Spleen (tissue), 13 donors: ENCODE measurements at regions of chr20 and their contacts with region 1.

Region 1: DNA sequence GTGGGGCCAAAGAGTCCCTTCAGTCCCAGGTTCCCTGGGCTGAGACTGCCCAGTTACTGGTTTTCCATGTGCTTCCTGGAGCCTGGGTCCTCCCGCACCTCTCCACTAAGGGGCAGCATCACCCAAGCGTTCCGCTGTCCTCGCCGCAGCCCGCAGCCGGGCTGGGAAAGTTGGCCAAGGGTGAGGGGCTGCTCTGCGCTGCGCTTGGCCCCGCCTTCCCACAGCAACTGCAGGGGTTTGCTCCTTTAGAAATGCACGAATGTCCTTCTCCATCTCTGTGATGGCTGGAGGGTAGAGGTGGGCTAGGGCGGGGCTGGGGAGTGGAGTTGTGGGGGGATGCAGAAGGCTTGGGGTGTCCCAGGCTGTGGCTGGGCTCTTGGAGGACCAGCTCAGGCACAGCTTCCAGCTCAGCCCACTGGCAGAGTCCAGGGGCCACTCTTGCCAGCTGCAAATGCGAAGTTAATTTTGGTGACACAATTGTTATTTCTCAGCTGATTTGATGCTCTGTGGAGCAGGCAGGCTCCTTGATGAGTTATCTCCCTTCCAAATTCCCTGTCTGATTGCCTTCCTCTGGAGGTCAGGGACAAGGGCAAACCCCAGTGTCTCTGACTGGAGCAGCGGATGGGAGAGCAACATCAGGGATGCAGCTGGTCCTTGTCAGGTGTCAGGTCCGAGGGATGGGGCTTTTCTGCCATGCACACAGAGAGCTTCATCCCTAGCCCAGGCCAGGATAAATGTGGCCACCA is 63.2 kb downstream of the NOL4L start:
- DNase-seq: peak; percentile 89
- H3K4me3 ChIP-seq: no peak overlapping the region
- H3K27ac ChIP-seq: peak overlapping the region in 7 of 8 donors; percentile 19 to 76 (median 64)
- H3K4me1 ChIP-seq: peaks cover 50 to 86% (median 78%) of the 10 kb centered on the region in 6 donors
- H3K27me3 ChIP-seq: no peaks in the 10 kb centered on the region
- CTCF ChIP-seq: peak; percentile 81 to 93 (median 88)
- POLR2A ChIP-seq: no peak

Region 2: GRCh38 chr20:32183947-32184635 is 337.9 kb before region 1 on chr20:
- intact Hi-C with region 1: no loop called
- DNase-seq: no peak
- H3K4me3 ChIP-seq: no peak overlapping the region
- H3K27ac ChIP-seq: no peak overlapping the region
- H3K4me1 ChIP-seq: peaks cover under 1 to 12% (median 6%) of the 10 kb centered on the region in 6 donors
- H3K27me3 ChIP-seq: no peaks in the 10 kb centered on the region
- CTCF ChIP-seq: no peak
- POLR2A ChIP-seq: no peak

Region 3: DNA sequence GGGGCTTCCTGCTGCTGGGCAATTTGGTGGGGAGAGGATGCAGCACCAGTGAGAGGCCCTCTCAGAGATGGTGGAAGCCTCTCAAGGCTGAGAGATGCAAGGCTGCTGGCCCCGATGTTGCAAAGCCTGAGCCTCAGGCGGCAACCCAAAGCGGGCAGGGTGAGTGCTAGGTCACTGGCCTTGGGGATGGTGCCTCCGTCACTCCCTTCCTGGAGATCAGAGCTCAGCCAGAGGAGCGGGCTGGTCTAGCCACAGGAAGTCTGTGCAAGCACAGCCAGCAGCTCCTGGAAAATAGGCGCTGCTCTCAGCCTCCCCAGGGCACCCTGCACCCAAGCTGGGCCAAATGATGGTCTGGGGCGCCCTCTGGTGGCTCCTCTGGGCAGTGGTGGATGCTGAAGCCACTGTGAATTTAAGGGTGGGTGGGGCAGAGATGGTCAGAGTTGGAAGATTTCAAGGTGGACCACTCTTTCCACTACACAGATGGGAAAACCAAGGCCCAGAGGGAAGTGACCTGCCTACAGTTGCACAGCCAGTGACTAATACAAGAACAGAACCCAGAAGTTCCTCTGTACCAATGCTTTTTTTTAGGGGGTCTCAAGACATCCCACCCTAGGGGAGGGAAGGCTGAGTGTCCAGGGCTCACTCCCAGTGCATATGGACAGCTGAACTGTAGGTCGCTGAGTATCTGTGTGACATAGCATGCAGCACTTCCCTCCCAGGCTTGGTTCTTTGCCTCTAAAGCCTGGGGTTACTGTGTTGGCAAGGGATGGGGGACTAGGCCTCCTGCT is 131.0 kb after region 1 on chr20:
- intact Hi-C with region 1: loop called (anchors 1 kb)
- DNase-seq: peak; percentile 95
- H3K4me3 ChIP-seq: peak overlapping the region in 1 of 8 donors; percentile 9
- H3K27ac ChIP-seq: peak overlapping the region in 2 of 8 donors; percentile 9 to 14
- H3K4me1 ChIP-seq: peaks cover 6 to 46% (median 23%) of the 10 kb centered on the region in 6 donors
- H3K27me3 ChIP-seq: no peaks in the 10 kb centered on the region
- CTCF ChIP-seq: peak; percentile 87 to 99 (median 97)
- POLR2A ChIP-seq: no peak